H1 (cell line): ENCODE measurements at regions of chr1 and their contacts with region 1.

Region 1: DNA sequence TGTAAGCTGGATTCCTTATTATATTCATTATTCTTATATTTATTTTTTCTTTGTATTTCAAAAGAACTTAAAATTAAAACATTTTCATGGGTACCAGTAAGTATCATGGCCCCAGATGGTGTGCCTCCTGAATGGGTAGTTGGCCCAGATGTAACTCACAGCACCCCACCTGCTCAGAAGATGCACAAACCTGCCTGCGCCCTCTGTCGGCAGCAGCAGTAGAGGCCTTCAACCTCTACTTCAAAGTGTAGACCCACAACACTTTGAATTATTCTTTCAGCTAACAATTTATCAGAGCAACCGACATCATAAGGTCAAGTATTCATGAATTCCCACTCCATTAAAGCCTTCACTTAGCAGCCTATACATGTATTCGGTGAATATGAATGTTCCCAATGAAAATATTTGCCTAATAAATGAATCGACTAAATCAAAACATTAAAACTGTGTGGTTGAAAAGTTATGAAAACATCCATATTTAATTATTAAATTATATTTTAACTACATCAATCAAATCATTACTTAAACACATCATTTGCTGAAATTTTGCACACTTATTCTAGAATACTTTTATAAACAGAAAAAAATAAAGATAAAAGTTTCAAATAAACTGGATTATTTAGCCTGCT is 25.4 kb downstream of the PIGM start:
- DNase-seq: peak; percentile 46 to 78
- H3K4me3 ChIP-seq: no peak overlapping the region
- H3K27ac ChIP-seq: no peak overlapping the region
- H3K4me1 ChIP-seq: no peaks in the 10 kb centered on the region
- H3K27me3 ChIP-seq: no peaks in the 10 kb centered on the region
- CTCF ChIP-seq: peak; percentile 94 to 97 (median 94)
- EP300 ChIP-seq: no peak
- POLR2A ChIP-seq: no peak
- RAD21 ChIP-seq: peak; percentile 84 to 87

Region 2: DNA sequence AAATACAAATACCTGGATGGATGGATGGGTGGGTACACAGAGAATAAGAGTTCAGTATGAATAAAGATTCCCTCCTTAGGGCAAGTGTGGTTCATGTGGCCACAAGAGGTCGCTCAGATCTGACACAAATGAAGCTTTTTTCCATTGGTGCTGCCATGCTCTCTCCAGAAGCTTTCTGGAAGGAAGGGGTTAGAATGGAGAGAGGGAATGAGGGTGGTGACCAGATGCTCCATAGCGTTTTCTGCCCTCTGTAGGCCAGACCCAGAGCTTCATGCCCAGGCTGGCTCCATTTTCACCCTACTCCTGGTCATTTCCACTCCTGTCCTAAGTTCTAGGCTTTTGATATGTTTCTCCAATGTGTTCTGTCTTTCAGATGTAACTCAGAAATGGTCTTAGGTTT is 207.5 kb before region 1 on chr1:
- CTCF ChIA-PET with region 1: interaction called, 51 read pairs
- POLR2A ChIA-PET with region 1: no interaction called
- DNase-seq: peak in 1 of 2 experiments; percentile 59
- H3K4me3 ChIP-seq: no peak overlapping the region
- H3K27ac ChIP-seq: no peak overlapping the region
- H3K4me1 ChIP-seq: no peaks in the 10 kb centered on the region
- H3K27me3 ChIP-seq: no peaks in the 10 kb centered on the region
- CTCF ChIP-seq: peak; percentile 52 to 96 (median 91)
- EP300 ChIP-seq: no peak
- POLR2A ChIP-seq: no peak
- RAD21 ChIP-seq: peak; percentile 83 to 85

Region 3: GRCh38 chr1:159839116-159839849 is 167.1 kb before region 1 on chr1:
- CTCF ChIA-PET with region 1: interaction called, 20 read pairs
- POLR2A ChIA-PET with region 1: no interaction called
- DNase-seq: no peak
- H3K4me3 ChIP-seq: no peak overlapping the region
- H3K27ac ChIP-seq: no peak overlapping the region
- H3K4me1 ChIP-seq: no peaks in the 10 kb centered on the region
- H3K27me3 ChIP-seq: peaks cover 0 to 2% (median 0%) of the 10 kb centered on the region in 4 experiments; a peak in 2 of 7 replicates
- CTCF ChIP-seq: no peak
- EP300 ChIP-seq: no peak
- POLR2A ChIP-seq: no peak
- RAD21 ChIP-seq: no peak

Region 4: GRCh38 chr1:159881930-159882839 is 124.2 kb before region 1 on chr1:
- CTCF ChIA-PET with region 1: interaction called, 177 read pairs
- POLR2A ChIA-PET with region 1: no interaction called
- DNase-seq: no peak
- H3K4me3 ChIP-seq: no peak overlapping the region
- H3K27ac ChIP-seq: no peak overlapping the region
- H3K4me1 ChIP-seq: no peaks in the 10 kb centered on the region
- H3K27me3 ChIP-seq: no peaks in the 10 kb centered on the region; a peak in 1 of 7 replicates
- CTCF ChIP-seq: no peak
- EP300 ChIP-seq: no peak
- POLR2A ChIP-seq: no peak
- RAD21 ChIP-seq: no peak

Region 5: DNA sequence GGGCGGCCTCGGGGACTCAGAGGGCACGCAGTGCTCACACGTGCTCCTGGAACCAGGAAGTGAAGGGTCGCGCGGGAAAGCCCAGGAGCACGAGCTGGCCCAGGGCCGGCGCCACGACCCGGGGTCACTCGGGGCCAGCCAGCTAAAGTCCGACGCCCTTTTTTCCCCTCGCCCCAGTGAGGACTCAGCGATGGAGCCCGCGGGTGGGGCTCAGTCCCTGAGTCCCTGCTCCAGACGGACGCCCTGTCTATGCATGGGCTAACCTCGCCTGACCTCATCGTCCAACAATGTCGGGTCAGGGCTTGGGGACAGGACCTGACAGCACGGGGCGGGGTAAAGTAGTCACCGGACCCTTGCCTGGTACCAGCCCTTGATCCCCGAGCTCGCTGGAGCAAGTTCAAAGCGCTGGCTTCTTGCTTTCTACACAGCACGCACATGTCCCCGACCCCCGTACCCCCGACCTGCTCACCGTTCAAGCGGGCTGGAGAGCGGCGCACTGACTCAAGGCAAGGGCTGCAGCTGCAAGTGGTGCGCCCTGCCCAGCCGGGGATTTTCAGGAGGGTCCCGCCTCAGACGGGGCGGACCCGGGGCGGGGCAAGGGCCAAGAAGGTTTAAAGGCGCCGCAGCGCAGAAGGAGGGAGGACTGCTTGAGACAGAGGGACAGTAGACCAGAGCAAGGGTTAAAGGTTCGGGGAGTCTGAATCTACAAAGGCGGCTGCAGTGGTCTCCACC is 81.3 kb before region 1 on chr1 and contains the start of gene TAGLN2:
- CTCF ChIA-PET with region 1: interaction called, 696 read pairs
- POLR2A ChIA-PET with region 1: no interaction called
- DNase-seq: peak in 1 of 2 experiments; percentile 92
- H3K4me3 ChIP-seq: peak within 1 kb of the TSS; percentile 55 to 63 (median 59)
- H3K27ac ChIP-seq: no peak within 1 kb of the TSS
- H3K4me1 ChIP-seq: peaks cover 5 to 21% (median 16%) of the 10 kb centered on the region in 4 experiments
- H3K27me3 ChIP-seq: peaks cover 0 to 17% (median 8%) of the 10 kb centered on the region in 4 experiments; a peak in 5 of 7 replicates
- CTCF ChIP-seq: no peak; a peak in 1 of 4 replicates
- EP300 ChIP-seq: no peak
- POLR2A ChIP-seq: peak in 1 of 2 experiments; percentile 74; a peak in 2 of 3 replicates
- RAD21 ChIP-seq: peak in 1 of 2 experiments; percentile 16; a peak in 1 of 4 replicates
- total RNA-seq, gene TAGLN2: 86.0 and 93.0 TPM in 2 replicates

Region 6: GRCh38 chr1:159970932-159971342 is 35.5 kb before region 1 on chr1:
- CTCF ChIA-PET with region 1: interaction called, 60 read pairs
- POLR2A ChIA-PET with region 1: no interaction called
- DNase-seq: no peak
- H3K4me3 ChIP-seq: no peak overlapping the region
- H3K27ac ChIP-seq: no peak overlapping the region
- H3K4me1 ChIP-seq: no peaks in the 10 kb centered on the region
- H3K27me3 ChIP-seq: peaks cover 0 to 3% (median 0%) of the 10 kb centered on the region in 4 experiments; a peak in 1 of 7 replicates
- CTCF ChIP-seq: no peak
- EP300 ChIP-seq: no peak
- POLR2A ChIP-seq: no peak
- RAD21 ChIP-seq: no peak

Region 7: DNA sequence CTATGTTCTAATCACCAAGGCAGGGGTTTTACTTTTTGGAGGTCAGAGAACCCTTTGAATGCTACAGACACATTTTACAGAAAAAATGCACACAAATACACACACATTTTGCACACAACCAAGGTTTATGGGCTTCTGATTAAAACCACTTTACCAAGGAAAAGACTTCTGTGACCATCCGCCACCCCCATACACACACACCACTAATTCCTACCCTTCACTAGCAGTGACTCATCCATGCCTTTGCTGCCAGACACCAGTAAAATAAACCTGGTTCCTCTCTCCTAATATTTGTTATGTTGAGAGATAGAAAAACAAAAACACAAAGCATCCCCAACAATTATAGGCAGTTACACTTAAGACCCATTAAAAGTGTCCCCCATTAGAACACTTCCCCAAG is 12.5 kb after region 1 on chr1:
- CTCF ChIA-PET with region 1: interaction called, 129 read pairs
- POLR2A ChIA-PET with region 1: no interaction called
- DNase-seq: no peak
- H3K4me3 ChIP-seq: no peak overlapping the region
- H3K27ac ChIP-seq: no peak overlapping the region
- H3K4me1 ChIP-seq: no peaks in the 10 kb centered on the region
- H3K27me3 ChIP-seq: no peaks in the 10 kb centered on the region
- CTCF ChIP-seq: no peak
- EP300 ChIP-seq: no peak
- POLR2A ChIP-seq: no peak
- RAD21 ChIP-seq: no peak